Activated CD4-positive, alpha-beta memory T cell treated with anti-CD3 and anti-CD28 coated beads for 36 hours (primary cell): ENCODE measurements at regions of chr11 and their contacts with region 1.

Region 1: DNA sequence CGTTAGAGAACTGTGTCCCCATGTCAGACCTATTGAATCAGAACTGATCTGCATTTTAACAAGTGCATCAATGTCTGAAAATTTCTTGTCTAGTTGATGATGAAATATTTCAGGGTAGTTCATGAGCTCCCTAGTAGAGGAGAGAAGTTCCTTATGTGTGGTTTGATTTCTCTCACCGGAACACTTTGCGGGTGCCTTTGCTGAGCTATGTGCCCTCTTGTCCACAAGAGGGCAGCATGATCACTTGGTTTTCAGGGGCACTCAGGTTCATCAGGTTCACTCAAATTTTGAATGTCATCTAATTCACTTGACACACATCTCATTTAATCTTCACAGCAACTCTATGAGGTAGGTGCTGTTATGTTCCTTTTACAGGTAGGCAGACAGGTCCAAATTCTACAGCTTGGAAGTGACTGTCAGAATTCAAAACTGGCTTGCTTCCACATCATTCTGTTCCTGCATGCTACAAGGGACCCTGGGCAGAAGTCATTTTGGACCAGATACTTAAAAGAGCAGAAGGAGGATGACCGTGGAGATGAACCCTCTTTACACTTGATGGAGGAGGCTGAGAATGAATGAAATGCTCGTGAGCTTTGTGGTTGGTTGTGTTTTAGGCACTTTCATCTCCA is 55.6 kb downstream of the P4HA3 start:
- DNase-seq: peak; percentile 66
- H3K4me3 Mint-ChIP-seq: no peak overlapping the region
- H3K27ac Mint-ChIP-seq: no peak overlapping the region
- H3K4me1 Mint-ChIP-seq: peaks cover 5% of the 10 kb centered on the region
- H3K27me3 Mint-ChIP-seq: no peaks in the 10 kb centered on the region

Region 2: DNA sequence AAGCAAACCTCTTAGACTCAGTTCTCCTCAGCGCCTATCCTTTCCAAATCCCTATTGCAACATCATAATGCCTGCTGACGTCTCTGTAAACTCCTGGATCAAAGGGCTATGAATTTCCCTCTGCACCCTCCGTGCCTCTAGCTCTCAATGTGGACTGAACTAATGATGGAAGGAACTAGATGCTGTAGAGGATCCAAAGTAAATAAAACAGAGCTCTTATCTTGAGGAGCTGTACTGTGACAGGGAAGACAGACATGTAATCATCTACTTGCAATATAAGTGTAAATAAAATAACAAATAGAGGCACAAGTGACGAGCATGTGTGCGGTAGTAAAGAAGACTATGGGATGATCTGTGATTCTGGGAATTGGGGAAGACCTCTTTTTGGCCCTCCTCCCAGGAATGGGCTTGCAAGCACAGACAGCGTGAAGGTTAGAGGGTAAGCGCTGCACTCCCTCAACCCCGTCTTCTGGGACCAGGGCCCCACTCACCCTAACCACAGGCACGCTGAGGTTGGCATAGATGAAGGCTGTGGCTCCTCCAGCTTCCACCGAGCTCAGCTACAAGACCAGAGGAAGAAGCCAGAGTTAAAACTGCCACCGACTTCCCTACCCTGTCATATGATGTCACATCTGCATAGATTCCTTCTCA is 13.4 kb after region 1 on chr11:
- CTCF ChIA-PET with region 1: interaction called, 12 read pairs
- POLR2A ChIA-PET with region 1: no interaction called
- intact Hi-C with region 1: no loop called
- DNase-seq: peak; percentile 45
- H3K4me3 Mint-ChIP-seq: no peak overlapping the region
- H3K27ac Mint-ChIP-seq: no peak overlapping the region
- H3K4me1 Mint-ChIP-seq: peaks cover 12% of the 10 kb centered on the region
- H3K27me3 Mint-ChIP-seq: peaks cover 2% of the 10 kb centered on the region

Region 3: GRCh38 chr11:74288161-74288560 is 32.3 kb after region 1 on chr11:
- CTCF ChIA-PET with region 1: no interaction called
- POLR2A ChIA-PET with region 1: no interaction called
- intact Hi-C with region 1: loop called (anchors 5 kb)
- DNase-seq: peak; percentile 32
- H3K4me3 Mint-ChIP-seq: no peak overlapping the region
- H3K27ac Mint-ChIP-seq: no peak overlapping the region
- H3K4me1 Mint-ChIP-seq: peaks cover 8% of the 10 kb centered on the region
- H3K27me3 Mint-ChIP-seq: peaks cover 2% of the 10 kb centered on the region

Region 4: GRCh38 chr11:74299015-74299414 is 43.2 kb after region 1 on chr11:
- CTCF ChIA-PET with region 1: interaction called, 13 read pairs
- POLR2A ChIA-PET with region 1: no interaction called
- intact Hi-C with region 1: loop called (anchors 5 kb)
- DNase-seq: no peak
- H3K4me3 Mint-ChIP-seq: no peak overlapping the region
- H3K27ac Mint-ChIP-seq: no peak overlapping the region
- H3K4me1 Mint-ChIP-seq: peaks cover 5% of the 10 kb centered on the region
- H3K27me3 Mint-ChIP-seq: peaks cover 7% of the 10 kb centered on the region

Region 5: DNA sequence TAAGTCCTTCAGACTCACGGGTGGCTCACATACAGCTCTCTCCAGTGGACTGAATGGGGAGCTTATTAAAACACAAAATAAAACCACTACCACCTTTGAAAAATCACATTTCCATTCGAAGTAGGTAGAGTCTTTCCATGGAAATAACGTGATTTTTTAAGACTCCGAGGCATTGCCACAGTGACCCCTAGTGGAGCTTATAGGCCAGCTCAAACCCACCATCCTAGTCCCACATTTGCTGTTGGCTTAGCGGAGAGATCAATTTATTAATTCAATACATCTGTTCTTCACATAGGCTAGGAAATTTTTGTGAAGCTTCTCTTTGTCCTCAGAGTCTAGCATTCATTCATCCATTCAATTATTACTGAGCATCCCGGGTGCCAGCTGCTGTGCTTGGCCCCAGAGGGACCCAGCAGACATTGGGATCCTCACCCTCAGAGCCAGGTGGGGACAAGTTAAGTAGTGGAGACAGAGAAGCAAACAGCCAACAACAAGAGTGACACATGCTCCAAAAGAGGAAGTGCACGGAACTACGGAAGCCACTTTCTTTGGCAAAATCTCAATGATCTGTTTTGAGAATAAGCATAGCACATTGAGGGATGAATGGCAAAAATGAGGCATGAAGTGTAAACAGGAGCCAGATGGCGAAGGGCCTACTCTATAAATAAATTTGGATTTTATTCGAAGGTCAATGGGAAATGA is 65.8 kb after region 1 on chr11:
- CTCF ChIA-PET with region 1: interaction called, 95 read pairs
- POLR2A ChIA-PET with region 1: no interaction called
- intact Hi-C with region 1: loop called (anchors 2 kb)
- DNase-seq: peak; percentile 53
- H3K4me3 Mint-ChIP-seq: no peak overlapping the region
- H3K27ac Mint-ChIP-seq: no peak overlapping the region
- H3K4me1 Mint-ChIP-seq: peaks cover 2% of the 10 kb centered on the region
- H3K27me3 Mint-ChIP-seq: peaks cover 15% of the 10 kb centered on the region